Motor neuron (in vitro differentiated cells): ENCODE measurements at regions of chr20 and their contacts with region 1.

Region 1: GRCh38 chr20:50189681-50190582 is 698 bp upstream of the CEBPB start:
- ATAC-seq: peak; percentile 14 to 73 (median 62)
- H3K4me3 ChIP-seq: peak overlapping the region; percentile 66 to 94 (median 77)
- H3K27ac ChIP-seq: peak overlapping the region; percentile 95 to 97
- H3K4me1 ChIP-seq: peaks cover 15 to 16% of the 10 kb centered on the region in 2 donors

Region 2: DNA sequence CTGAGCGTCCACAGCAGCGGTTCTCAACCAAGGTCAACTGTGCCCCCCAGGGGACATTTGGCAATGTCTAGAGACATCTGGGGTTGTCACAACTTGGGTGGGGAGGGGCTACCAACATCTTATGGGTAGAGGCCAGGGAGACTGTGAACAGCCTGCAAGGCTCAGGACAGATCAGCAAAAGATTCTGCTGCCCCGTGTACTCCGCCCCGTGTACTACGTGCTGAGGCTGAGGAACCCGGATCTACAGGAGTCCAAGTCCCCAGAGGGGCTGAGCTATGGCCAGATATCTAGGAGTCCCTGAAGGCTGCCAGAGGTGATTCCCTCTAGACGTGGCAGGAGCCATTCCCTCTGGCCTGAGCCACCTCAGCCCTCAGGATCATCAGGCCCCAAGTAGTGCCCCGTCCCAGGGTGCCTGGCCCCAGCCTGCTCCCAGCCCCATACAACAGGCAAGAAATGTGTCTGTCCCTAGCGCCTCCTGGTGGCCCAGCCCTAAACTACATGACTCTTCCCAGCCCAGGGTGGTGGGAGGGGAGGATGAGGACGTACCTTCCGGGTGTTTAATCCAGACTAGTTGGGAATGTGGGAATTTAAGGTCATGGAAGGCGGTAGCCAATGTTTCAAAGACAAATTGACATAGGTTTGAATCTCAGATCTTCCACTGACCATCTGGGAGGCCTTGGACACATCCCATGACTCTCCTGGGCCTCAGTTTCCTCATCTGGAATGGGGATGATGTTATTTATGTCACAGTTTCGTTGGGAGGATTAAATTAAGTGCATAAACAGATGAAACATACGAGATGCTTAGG is 270.7 kb after region 1 on chr20:
- in situ Hi-C with region 1: loop called in 8 of 9 experiments (anchors 5 to 25 kb)
- ATAC-seq: peak; percentile 87 to 95 (median 90)
- H3K4me3 ChIP-seq: no peak overlapping the region
- H3K27ac ChIP-seq: no peak overlapping the region
- H3K4me1 ChIP-seq: peaks cover 0 to 2% of the 10 kb centered on the region in 2 donors

Region 3: GRCh38 chr20:50575847-50576720 is 386.2 kb after region 1 on chr20:
- in situ Hi-C with region 1: loop called in 5 of 9 experiments (anchors 10 to 25 kb)
- ATAC-seq: peak; percentile 68 to 87 (median 80)
- H3K4me3 ChIP-seq: no peak overlapping the region
- H3K27ac ChIP-seq: no peak overlapping the region
- H3K4me1 ChIP-seq: no peaks in the 10 kb centered on the region

Region 4: DNA sequence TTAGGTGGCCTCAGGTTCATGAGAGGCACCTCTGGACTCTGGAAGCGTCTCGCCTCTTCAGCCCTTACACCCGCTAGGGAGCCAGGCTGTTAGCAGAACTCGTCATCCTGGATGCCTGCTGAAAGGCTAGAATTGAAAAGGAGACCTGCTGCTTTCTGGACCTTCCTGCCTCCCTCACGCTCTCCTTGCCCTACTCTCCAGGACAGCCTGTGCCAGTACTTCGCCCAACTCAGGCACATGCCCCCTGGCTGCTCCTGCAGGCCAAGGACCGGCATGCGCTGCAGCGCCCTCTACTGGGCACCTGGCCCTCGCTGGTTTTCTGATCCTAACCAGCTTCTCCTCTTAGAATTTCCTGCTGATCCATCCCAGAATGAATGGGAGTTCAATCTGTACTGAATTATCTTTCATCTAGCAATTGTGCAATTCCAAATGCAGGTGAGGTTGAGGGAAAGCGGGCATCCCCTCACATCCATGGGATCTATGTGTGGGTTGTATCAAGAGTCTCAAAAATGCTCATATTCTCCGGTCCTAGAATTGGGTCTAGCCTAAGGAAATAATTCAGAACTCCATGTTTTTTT is 398.2 kb after region 1 on chr20:
- in situ Hi-C with region 1: loop called in 3 of 9 experiments (anchors 10 to 25 kb)
- ATAC-seq: peak in 6 of 8 experiments; percentile 44 to 75 (median 62)
- H3K4me3 ChIP-seq: no peak overlapping the region
- H3K27ac ChIP-seq: no peak overlapping the region
- H3K4me1 ChIP-seq: no peaks in the 10 kb centered on the region

Region 5: GRCh38 chr20:50625986-50626677 is 436.2 kb after region 1 on chr20:
- in situ Hi-C with region 1: no loop called
- ATAC-seq: peak in 3 of 8 experiments; percentile 31 to 89 (median 56)
- H3K4me3 ChIP-seq: no peak overlapping the region
- H3K27ac ChIP-seq: no peak overlapping the region
- H3K4me1 ChIP-seq: peaks cover 14 to 20% of the 10 kb centered on the region in 2 donors

Region 6: DNA sequence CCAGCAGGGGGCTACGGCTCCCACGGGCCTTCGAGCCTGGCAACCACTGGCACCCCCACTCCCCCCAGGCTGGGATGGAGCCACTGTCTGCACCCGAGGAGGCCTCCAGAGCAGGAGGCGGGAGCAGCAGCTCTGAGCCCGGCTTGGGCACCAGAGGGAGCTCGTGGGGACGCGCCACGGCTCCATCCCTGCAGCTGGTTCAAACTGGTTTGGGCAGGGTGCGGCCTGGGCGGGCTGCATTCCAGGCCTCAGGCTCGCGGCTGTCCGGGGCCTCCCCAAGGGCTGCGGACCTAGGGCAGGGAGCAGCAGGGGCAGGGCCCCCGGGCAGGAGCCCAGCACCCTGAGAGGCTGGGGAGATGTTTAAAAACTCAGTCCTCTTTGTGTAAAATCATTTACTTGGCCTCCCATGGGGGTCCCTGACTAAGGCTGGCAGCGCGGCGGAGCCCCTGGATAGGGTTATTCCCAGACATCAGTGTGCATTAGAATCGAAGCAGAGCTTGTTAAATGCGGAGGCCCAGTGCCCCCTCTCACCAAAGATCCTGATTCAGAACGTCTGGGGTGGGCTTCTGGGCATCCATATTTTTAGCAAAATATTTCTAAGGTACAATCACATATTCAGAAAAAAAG is 600.8 kb after region 1 on chr20:
- in situ Hi-C with region 1: loop called in 1 of 9 experiments (anchors 25 kb)
- ATAC-seq: peak; percentile 76 to 85 (median 82)
- H3K4me3 ChIP-seq: no peak overlapping the region
- H3K27ac ChIP-seq: peak overlapping the region; percentile 80 to 83
- H3K4me1 ChIP-seq: peaks cover 26 to 37% of the 10 kb centered on the region in 2 donors